Kidney (tissue), 22 donors: ENCODE measurements at regions of chr16 and their contacts with region 1.

Region 1: DNA sequence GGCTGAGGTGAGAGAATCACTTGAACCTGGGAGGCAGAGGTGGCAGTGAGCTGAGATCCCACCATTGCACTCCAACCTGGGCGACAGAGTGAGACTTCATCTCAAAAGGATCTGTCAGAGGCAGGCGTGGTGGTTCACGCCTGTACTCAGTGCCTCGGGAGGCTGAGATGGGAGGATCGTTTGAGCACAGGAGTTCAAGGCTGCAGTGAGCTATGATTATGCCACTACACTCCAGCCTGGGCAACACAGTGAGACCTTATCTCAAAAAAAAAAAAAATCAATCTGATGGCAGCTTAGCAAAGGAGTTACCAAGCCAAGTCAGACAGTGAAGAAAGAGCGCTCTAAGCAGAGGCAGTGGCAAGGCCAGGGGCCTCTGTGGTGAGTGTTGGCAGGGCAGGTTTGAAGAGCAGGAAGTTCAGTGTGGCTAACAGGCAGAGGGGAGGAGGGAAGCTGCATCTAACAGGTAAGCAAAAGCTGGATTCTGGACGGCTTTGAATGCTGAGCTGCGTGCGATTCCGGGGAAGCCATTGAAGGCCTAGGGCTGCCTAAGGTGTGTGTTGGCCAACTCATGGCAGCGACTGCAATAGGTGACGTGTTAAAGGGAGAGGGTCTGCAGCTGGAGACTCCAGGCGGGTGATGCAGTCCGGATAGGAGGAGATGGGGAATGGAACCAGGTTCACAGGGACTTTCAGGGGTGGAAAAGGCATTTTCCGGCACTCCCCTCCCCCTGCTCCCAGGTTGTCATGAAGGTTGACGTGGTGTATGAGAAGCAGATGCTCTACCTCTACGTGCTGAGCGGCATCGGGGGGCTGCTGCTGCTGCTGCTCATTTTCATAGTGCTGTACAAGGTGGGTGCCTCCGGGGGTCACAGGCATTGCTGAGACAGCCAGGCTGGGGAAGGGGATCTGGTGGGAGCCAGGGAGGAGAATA is 7.0 kb downstream of the ZNF768 start:
- DNase-seq: peak in 1 of 5 donors; percentile 54
- H3K4me3 ChIP-seq: no peak overlapping the region
- H3K27ac ChIP-seq: no peak overlapping the region
- H3K4me1 ChIP-seq: peaks cover 0 to 12% (median 12%) of the 10 kb centered on the region in 3 donors
- H3K27me3 ChIP-seq: no peaks in the 10 kb centered on the region
- CTCF ChIP-seq: no peak

Region 2: DNA sequence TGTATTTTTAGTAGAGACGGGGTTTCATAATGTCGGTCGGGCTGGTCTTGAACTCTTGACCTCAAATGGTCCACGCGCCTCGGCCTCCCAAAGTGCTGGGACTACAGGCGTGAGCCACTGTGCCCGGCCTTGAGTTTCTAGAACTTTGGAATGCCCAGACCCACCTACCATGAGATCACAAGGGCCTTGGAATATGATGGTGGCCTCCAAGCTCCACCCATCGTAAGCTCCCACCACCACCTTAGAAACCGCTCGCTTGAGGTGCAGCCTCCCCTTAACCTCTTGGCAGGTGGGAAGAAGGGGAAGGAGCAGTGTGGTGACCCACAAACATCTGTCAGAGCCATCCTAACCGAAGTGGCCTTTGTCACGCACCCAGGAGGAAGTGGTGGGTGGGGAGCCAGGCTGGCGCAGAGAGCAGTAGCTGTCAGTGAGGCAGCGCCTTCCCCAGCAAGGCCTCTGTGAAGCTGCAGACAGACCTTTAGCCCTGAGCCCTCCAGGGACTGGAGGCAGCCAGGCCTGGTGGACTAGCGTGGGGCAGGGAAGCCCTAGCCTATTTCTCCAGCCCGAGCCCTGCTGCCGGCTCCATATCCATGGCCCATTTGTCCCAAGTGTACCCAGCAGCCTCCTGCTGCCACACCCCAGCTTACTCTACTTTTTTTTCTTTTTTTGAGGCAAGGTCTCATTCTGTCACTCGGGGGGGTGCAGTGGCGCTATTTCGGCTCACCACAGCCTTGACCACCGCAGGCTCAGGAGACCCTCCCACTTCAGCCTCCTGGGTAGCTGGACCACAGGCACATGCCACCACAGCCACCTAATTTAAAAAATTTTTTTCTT is 60.6 kb before region 1 on chr16:
- intact Hi-C with region 1: loop called (anchors 10 kb)
- DNase-seq: peak in 1 of 5 donors; percentile 76
- H3K4me3 ChIP-seq: no peak overlapping the region
- H3K27ac ChIP-seq: no peak overlapping the region
- H3K4me1 ChIP-seq: no peaks in the 10 kb centered on the region
- H3K27me3 ChIP-seq: no peaks in the 10 kb centered on the region
- CTCF ChIP-seq: no peak